Sciatic nerve (tissue), 2 donors: ENCODE measurements at regions of chr15 and their contacts with region 1.

Region 1: DNA sequence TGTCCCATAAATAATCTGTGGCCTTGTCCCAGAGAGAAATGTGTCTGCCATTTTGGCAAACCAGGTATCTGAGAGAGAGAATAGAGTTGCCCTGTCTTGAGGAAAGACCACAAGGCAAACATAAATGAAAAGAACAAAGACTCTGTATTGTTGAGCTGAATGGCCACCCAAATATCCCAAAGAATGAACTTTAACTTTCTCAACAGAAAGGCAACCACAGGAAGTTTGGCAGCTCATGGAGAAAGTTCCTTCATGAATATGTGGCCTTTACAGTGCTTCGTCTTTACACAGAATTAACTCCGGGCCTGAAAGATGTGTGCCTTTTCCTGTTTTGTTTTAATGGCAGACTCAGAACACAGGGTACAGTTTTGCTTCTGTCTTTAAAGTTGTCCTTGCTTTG is 41.4 kb upstream of the THBS1 start:
- DNase-seq: no peak
- ATAC-seq: peak; percentile 30

Region 2: GRCh38 chr15:39479911-39480310 is 59.6 kb before region 1 on chr15:
- intact Hi-C with region 1: loop called (anchors 2 kb)
- DNase-seq: no peak
- ATAC-seq: no peak